B cell (primary cell): ENCODE measurements at regions of chr10 and their contacts with region 1.

Region 1: GRCh38 chr10:28190196-28190595 is 112.7 kb downstream of the MPP7 start:
- DNase-seq: no peak
- ATAC-seq: no peak
- H3K4me3 ChIP-seq: no peak overlapping the region
- H3K4me3 Mint-ChIP-seq: no peak overlapping the region
- H3K27ac ChIP-seq: no peak overlapping the region
- H3K27ac Mint-ChIP-seq: no peak overlapping the region
- H3K4me1 ChIP-seq: no peaks in the 10 kb centered on the region
- H3K4me1 Mint-ChIP-seq: no peaks in the 10 kb centered on the region
- H3K27me3 ChIP-seq: no peaks in the 10 kb centered on the region
- H3K27me3 Mint-ChIP-seq: no peaks in the 10 kb centered on the region
- CTCF ChIP-seq: no peak

Region 2: DNA sequence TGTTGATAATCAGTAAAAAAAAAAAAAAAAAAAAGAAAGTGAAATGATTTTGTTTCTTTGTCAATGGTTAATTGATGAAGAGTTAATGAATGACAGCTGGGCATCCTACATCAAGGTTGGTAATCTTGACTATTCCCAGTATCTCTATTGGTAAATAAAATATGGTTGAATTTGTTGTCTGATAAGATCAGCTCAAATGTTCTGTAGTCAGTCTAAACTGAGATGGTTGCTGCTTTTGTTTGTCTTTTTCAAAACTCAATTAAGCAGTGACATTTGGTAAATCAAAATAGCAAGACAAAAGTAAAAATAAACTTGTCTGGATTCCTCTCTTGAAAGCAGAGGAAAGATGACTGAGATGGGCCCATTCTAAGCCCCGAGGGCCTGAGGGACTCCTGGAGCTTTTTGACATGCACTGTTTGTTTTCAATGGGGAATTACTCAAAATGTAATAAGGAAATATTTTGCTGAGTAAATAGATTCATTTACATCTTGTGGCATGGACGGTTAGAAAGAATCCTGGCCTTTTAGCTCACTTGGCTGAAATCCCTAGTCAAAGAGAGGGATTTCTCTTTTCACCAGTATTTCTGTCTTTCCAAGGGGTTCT is 552.7 kb before region 1 on chr10:
- CTCF ChIA-PET with region 1: no interaction called
- POLR2A ChIA-PET with region 1: no interaction called
- intact Hi-C with region 1: no loop called
- DNase-seq: no peak
- ATAC-seq: no peak
- H3K4me3 ChIP-seq: no peak overlapping the region
- H3K4me3 Mint-ChIP-seq: no peak overlapping the region
- H3K27ac ChIP-seq: no peak overlapping the region
- H3K27ac Mint-ChIP-seq: no peak overlapping the region
- H3K4me1 ChIP-seq: no peaks in the 10 kb centered on the region
- H3K4me1 Mint-ChIP-seq: no peaks in the 10 kb centered on the region
- H3K27me3 ChIP-seq: no peaks in the 10 kb centered on the region
- H3K27me3 Mint-ChIP-seq: no peaks in the 10 kb centered on the region
- CTCF ChIP-seq: no peak

Region 3: GRCh38 chr10:27713927-27714326 is 476.3 kb before region 1 on chr10:
- CTCF ChIA-PET with region 1: no interaction called
- POLR2A ChIA-PET with region 1: no interaction called
- intact Hi-C with region 1: no loop called
- DNase-seq: no peak
- ATAC-seq: no peak
- H3K4me3 ChIP-seq: no peak overlapping the region
- H3K4me3 Mint-ChIP-seq: no peak overlapping the region
- H3K27ac ChIP-seq: no peak overlapping the region
- H3K27ac Mint-ChIP-seq: no peak overlapping the region
- H3K4me1 ChIP-seq: no peaks in the 10 kb centered on the region
- H3K4me1 Mint-ChIP-seq: no peaks in the 10 kb centered on the region
- H3K27me3 ChIP-seq: peaks cover 0 to 1% (median 0%) of the 10 kb centered on the region in 4 experiments
- H3K27me3 Mint-ChIP-seq: peaks cover 22% of the 10 kb centered on the region
- CTCF ChIP-seq: no peak

Region 4: GRCh38 chr10:28137907-28138880 is 52.0 kb before region 1 on chr10:
- CTCF ChIA-PET with region 1: no interaction called
- POLR2A ChIA-PET with region 1: no interaction called
- intact Hi-C with region 1: no loop called
- DNase-seq: no peak
- ATAC-seq: no peak
- H3K4me3 ChIP-seq: no peak overlapping the region
- H3K4me3 Mint-ChIP-seq: no peak overlapping the region
- H3K27ac ChIP-seq: no peak overlapping the region
- H3K27ac Mint-ChIP-seq: no peak overlapping the region
- H3K4me1 ChIP-seq: no peaks in the 10 kb centered on the region
- H3K4me1 Mint-ChIP-seq: no peaks in the 10 kb centered on the region
- H3K27me3 ChIP-seq: no peaks in the 10 kb centered on the region
- H3K27me3 Mint-ChIP-seq: no peaks in the 10 kb centered on the region
- CTCF ChIP-seq: no peak

Region 5: DNA sequence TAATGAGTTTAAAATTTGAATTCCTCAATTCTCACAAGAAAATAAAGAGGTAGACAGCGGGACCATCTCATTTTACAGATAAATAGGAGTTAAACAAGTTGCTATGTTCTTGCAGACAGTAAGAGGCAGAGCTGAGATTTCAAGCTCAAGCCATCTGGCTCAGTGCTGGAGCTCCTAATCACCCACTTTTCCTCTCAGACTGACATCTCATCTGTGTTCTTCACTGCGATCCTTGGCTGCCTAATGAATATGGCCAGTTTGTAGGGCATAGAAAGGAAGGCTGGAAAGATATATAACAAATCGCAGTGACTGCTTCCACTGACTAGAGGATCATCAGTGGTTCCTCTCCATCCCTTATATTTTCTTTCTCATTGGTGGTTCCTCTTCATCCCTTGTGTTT is 38.6 kb before region 1 on chr10:
- CTCF ChIA-PET with region 1: no interaction called
- POLR2A ChIA-PET with region 1: no interaction called
- intact Hi-C with region 1: no loop called
- DNase-seq: no peak
- ATAC-seq: no peak
- H3K4me3 ChIP-seq: no peak overlapping the region
- H3K4me3 Mint-ChIP-seq: no peak overlapping the region
- H3K27ac ChIP-seq: no peak overlapping the region
- H3K27ac Mint-ChIP-seq: no peak overlapping the region
- H3K4me1 ChIP-seq: no peaks in the 10 kb centered on the region
- H3K4me1 Mint-ChIP-seq: no peaks in the 10 kb centered on the region
- H3K27me3 ChIP-seq: no peaks in the 10 kb centered on the region
- H3K27me3 Mint-ChIP-seq: no peaks in the 10 kb centered on the region
- CTCF ChIP-seq: no peak

Region 6: GRCh38 chr10:28179006-28179742 is 11.0 kb before region 1 on chr10:
- CTCF ChIA-PET with region 1: interaction called, 14 read pairs
- POLR2A ChIA-PET with region 1: no interaction called
- intact Hi-C with region 1: no loop called
- DNase-seq: peak; percentile 57
- ATAC-seq: no peak
- H3K4me3 ChIP-seq: peak overlapping the region in 1 of 5 experiments; percentile 34
- H3K4me3 Mint-ChIP-seq: no peak overlapping the region
- H3K27ac ChIP-seq: no peak overlapping the region
- H3K27ac Mint-ChIP-seq: no peak overlapping the region
- H3K4me1 ChIP-seq: peaks cover 7 to 14% of the 10 kb centered on the region in 2 donors
- H3K4me1 Mint-ChIP-seq: peaks cover 15% of the 10 kb centered on the region
- H3K27me3 ChIP-seq: no peaks in the 10 kb centered on the region
- H3K27me3 Mint-ChIP-seq: no peaks in the 10 kb centered on the region
- CTCF ChIP-seq: peak; percentile 93